ENCODE measurements at regions of chr17 and their contacts with region 1.

Region 1: GRCh38 chr17:4733073-4733531 is 1.9 kb downstream of the MED11 start:
- DNase-seq: no peak
- H3K4me3 ChIP-seq: no peak overlapping the region
- H3K27ac ChIP-seq: no peak overlapping the region
- H3K4me1 ChIP-seq: peaks cover 8 to 11% of the 10 kb centered on the region in 2 donors
- H3K27me3 ChIP-seq: no peaks in the 10 kb centered on the region
- CTCF ChIP-seq: no peak
- POLR2A ChIP-seq: no peak

Region 2: GRCh38 chr17:4623249-4623648 is 109.9 kb before region 1 on chr17:
- intact Hi-C with region 1: no loop called
- DNase-seq: no peak
- H3K4me3 ChIP-seq: no peak overlapping the region
- H3K27ac ChIP-seq: no peak overlapping the region
- H3K4me1 ChIP-seq: no peaks in the 10 kb centered on the region
- H3K27me3 ChIP-seq: no peaks in the 10 kb centered on the region
- CTCF ChIP-seq: no peak
- POLR2A ChIP-seq: no peak

Region 3: GRCh38 chr17:4658478-4659305 is 74.4 kb before region 1 on chr17:
- intact Hi-C with region 1: no loop called
- DNase-seq: no peak
- H3K4me3 ChIP-seq: no peak overlapping the region
- H3K27ac ChIP-seq: no peak overlapping the region
- H3K4me1 ChIP-seq: no peaks in the 10 kb centered on the region
- H3K27me3 ChIP-seq: no peaks in the 10 kb centered on the region
- CTCF ChIP-seq: no peak
- POLR2A ChIP-seq: no peak

Region 4: DNA sequence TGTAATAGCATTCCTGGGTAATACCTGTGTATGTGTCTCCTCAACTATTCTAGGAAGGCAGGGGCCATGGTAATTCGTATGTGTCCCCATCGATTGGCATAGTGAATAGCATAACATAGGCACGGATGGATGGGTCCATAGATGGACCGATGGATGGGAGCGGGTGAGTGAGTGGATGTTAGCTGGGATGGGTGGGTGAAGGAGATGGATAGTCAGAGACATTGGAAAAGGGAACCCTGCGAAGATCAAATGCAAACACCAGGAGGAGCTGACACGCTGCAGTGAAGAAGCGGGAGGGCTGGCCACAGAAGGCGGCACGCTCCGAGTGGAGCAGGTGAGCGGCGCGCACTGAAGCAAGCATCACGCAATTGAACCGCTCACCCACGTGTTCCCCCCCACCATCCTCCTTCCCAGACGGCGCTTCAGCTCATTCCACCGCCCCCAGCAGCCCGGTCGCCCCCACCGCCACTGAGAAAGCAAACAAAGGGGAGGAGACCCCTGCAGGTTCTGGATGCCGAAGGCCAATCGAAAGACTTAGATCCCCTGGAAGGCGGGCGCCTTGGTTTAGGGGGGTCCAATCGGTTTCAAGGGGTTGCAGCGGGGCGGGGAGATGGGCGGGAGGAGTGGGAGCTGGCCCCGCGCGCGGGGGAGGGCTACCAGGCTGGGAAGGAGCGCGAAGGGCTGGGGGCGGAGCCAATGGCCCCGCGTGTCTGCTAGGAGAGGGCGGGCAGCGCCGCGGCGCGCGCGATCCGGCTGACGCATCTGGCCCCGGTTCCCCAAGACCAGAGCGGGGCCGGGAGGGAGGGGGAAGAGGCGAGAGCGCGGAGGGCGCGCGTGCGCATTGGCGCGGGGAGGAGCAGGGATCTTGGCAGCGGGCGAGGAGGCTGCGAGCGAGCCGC is 23.1 kb before region 1 on chr17 and contains the start of gene ARRB2:
- intact Hi-C with region 1: loop called (anchors 2 kb)
- DNase-seq: peak; percentile 98 to 99
- H3K4me3 ChIP-seq: peak within 1 kb of the TSS in 2 of 3 donors; percentile 48 to 59
- H3K27ac ChIP-seq: peak within 1 kb of the TSS; percentile 42 to 81 (median 68)
- H3K4me1 ChIP-seq: peaks cover 7 to 8% of the 10 kb centered on the region in 2 donors
- H3K27me3 ChIP-seq: no peaks in the 10 kb centered on the region
- CTCF ChIP-seq: peak; percentile 27 to 72 (median 63)
- POLR2A ChIP-seq: peak in 1 of 2 donors; percentile 42
- total RNA-seq, gene ARRB2: 8.4 to 20.6 (median 14.4) TPM

Region 5: GRCh38 chr17:4833941-4834680 is 101.0 kb after region 1 on chr17:
- intact Hi-C with region 1: no loop called
- DNase-seq: peak; percentile 25 to 32
- H3K4me3 ChIP-seq: peak overlapping the region; percentile 49 to 95 (median 92)
- H3K27ac ChIP-seq: peak overlapping the region; percentile 69 to 83 (median 69)
- H3K4me1 ChIP-seq: peaks cover 12 to 24% of the 10 kb centered on the region in 2 donors
- H3K27me3 ChIP-seq: no peaks in the 10 kb centered on the region
- CTCF ChIP-seq: no peak
- POLR2A ChIP-seq: no peak